ENCODE measurements at regions of chr7 and their contacts with region 1.

Region 1: GRCh38 chr7:105876091-105876963 is at the start of gene ATXN7L1:
- DNase-seq: peak; percentile 99
- ATAC-seq: peak; percentile 77
- H3K4me3 ChIP-seq: peak within 1 kb of the TSS; percentile 90
- H3K27ac ChIP-seq: peak within 1 kb of the TSS; percentile 62
- H3K4me1 ChIP-seq: peaks cover 32% of the 10 kb centered on the region
- H3K27me3 ChIP-seq: no peaks in the 10 kb centered on the region
- CTCF ChIP-seq: 0 out of 2 replicates have a peak, but pooled peaks have one; percentile 23
- total RNA-seq, gene ATXN7L1: 6.2 and 16.0 TPM in 2 replicates

Region 2: GRCh38 chr7:105652359-105652993 is 223.9 kb before region 1 on chr7:
- CTCF ChIA-PET with region 1: no interaction called
- POLR2A ChIA-PET with region 1: no interaction called
- intact Hi-C with region 1: loop called (anchors 2 kb)
- DNase-seq: peak; percentile 92
- ATAC-seq: peak; percentile 53
- H3K4me3 ChIP-seq: no peak overlapping the region
- H3K27ac ChIP-seq: no peak overlapping the region
- H3K4me1 ChIP-seq: peaks cover 47% of the 10 kb centered on the region
- H3K27me3 ChIP-seq: no peaks in the 10 kb centered on the region
- CTCF ChIP-seq: peak; percentile 96

Region 3: GRCh38 chr7:105765846-105766245 is 110.5 kb before region 1 on chr7:
- CTCF ChIA-PET with region 1: interaction called, 15 read pairs
- POLR2A ChIA-PET with region 1: no interaction called
- intact Hi-C with region 1: no loop called
- DNase-seq: no peak
- ATAC-seq: no peak
- H3K4me3 ChIP-seq: no peak overlapping the region
- H3K27ac ChIP-seq: no peak overlapping the region
- H3K4me1 ChIP-seq: peaks cover 32% of the 10 kb centered on the region
- H3K27me3 ChIP-seq: no peaks in the 10 kb centered on the region
- CTCF ChIP-seq: no peak

Region 4: GRCh38 chr7:105795390-105795729 is 81.0 kb before region 1 on chr7:
- CTCF ChIA-PET with region 1: no interaction called
- POLR2A ChIA-PET with region 1: no interaction called
- intact Hi-C with region 1: loop called (anchors 1 kb)
- DNase-seq: peak; percentile 48
- ATAC-seq: 0 out of 2 replicates have a peak, but pooled peaks have one; percentile 2
- H3K4me3 ChIP-seq: peak overlapping the region; percentile 46; the same call in 1 of the 2 replicates
- H3K27ac ChIP-seq: peak overlapping the region; percentile 87
- H3K4me1 ChIP-seq: peaks cover 46% of the 10 kb centered on the region
- H3K27me3 ChIP-seq: no peaks in the 10 kb centered on the region
- CTCF ChIP-seq: no peak

Region 5: GRCh38 chr7:105830391-105831301 is 45.7 kb before region 1 on chr7:
- CTCF ChIA-PET with region 1: no interaction called
- POLR2A ChIA-PET with region 1: interaction called, 3 read pairs
- intact Hi-C with region 1: loop called (anchors 1 kb)
- DNase-seq: peak; percentile 99
- ATAC-seq: peak; percentile 82
- H3K4me3 ChIP-seq: no peak overlapping the region
- H3K27ac ChIP-seq: peak overlapping the region; percentile 82
- H3K4me1 ChIP-seq: peaks cover 57% of the 10 kb centered on the region
- H3K27me3 ChIP-seq: no peaks in the 10 kb centered on the region
- CTCF ChIP-seq: no peak

Region 6: GRCh38 chr7:106009403-106010226 is 133.3 kb after region 1 on chr7:
- CTCF ChIA-PET with region 1: no interaction called
- POLR2A ChIA-PET with region 1: no interaction called
- intact Hi-C with region 1: loop called (anchors 1 kb)
- DNase-seq: peak; percentile 91
- ATAC-seq: peak; percentile 99
- H3K4me3 ChIP-seq: no peak overlapping the region
- H3K27ac ChIP-seq: no peak overlapping the region
- H3K4me1 ChIP-seq: no peaks in the 10 kb centered on the region
- H3K27me3 ChIP-seq: no peaks in the 10 kb centered on the region
- CTCF ChIP-seq: peak; percentile 99

Region 7: GRCh38 chr7:106153891-106154449 is 277.6 kb after region 1 on chr7:
- CTCF ChIA-PET with region 1: no interaction called
- POLR2A ChIA-PET with region 1: no interaction called
- intact Hi-C with region 1: loop called (anchors 5 kb)
- DNase-seq: peak; percentile 93
- ATAC-seq: peak; percentile 99
- H3K4me3 ChIP-seq: peak overlapping the region; percentile 39; the same call in 1 of the 2 replicates
- H3K27ac ChIP-seq: no peak overlapping the region
- H3K4me1 ChIP-seq: peaks cover 8% of the 10 kb centered on the region
- H3K27me3 ChIP-seq: no peaks in the 10 kb centered on the region
- CTCF ChIP-seq: peak; percentile 99

Measured in PC-3 (cell line).